PC-3 (cell line): ENCODE measurements at regions of chr3 and their contacts with region 1.

Region 1: DNA sequence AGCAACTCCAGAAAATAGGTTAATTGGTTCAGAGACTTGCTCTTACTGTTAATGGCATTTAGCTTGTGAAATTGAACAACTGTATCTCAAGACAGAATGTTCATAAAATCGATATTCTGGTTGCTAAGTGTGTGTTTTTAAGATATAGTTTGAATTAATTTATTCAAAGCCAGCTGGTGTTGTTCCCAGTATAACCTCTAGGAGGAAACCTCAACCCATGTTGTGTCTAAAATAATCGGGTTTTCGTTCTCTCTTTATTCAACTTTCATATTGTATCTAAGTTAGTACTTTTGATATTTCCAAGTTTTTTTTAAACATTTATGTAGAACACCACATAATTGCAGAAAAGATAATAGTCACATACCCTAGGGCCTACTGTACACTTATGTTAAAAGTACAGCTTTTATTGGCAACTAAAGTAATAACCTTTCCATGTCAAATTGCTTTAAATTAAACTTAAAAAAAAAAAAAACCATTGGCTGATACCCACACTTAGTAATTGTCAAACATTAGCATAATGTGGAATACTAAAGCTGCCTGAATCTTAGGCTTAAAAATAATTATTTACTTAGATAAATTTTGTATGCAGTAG is 90.9 kb downstream of the SAMMSON start:
- DNase-seq: peak; percentile 37
- ATAC-seq: peak; percentile 18; the same call in 1 of the 2 replicates
- H3K4me3 ChIP-seq: no peak overlapping the region
- H3K27ac ChIP-seq: no peak overlapping the region
- H3K4me1 ChIP-seq: no peaks in the 10 kb centered on the region
- H3K27me3 ChIP-seq: 0 out of 2 replicates have a peak, but pooled peaks cover 6% of the 10 kb centered on the region
- CTCF ChIP-seq: peak; percentile 66

Region 2: GRCh38 chr3:70067860-70068521 is 22.4 kb before region 1 on chr3:
- CTCF ChIA-PET with region 1: no interaction called
- POLR2A ChIA-PET with region 1: no interaction called
- intact Hi-C with region 1: no loop called
- DNase-seq: no peak
- ATAC-seq: no peak
- H3K4me3 ChIP-seq: no peak overlapping the region
- H3K27ac ChIP-seq: no peak overlapping the region
- H3K4me1 ChIP-seq: no peaks in the 10 kb centered on the region
- H3K27me3 ChIP-seq: peaks cover 40% of the 10 kb centered on the region
- CTCF ChIP-seq: no peak

Region 3: GRCh38 chr3:70464876-70465275 is 374.5 kb after region 1 on chr3:
- CTCF ChIA-PET with region 1: no interaction called
- POLR2A ChIA-PET with region 1: no interaction called
- intact Hi-C with region 1: no loop called
- DNase-seq: no peak
- ATAC-seq: no peak
- H3K4me3 ChIP-seq: no peak overlapping the region
- H3K27ac ChIP-seq: no peak overlapping the region
- H3K4me1 ChIP-seq: no peaks in the 10 kb centered on the region
- H3K27me3 ChIP-seq: peaks cover 13% of the 10 kb centered on the region; the same call in 1 of the 2 replicates
- CTCF ChIP-seq: no peak

Region 4: GRCh38 chr3:70531063-70531657 is 440.7 kb after region 1 on chr3:
- CTCF ChIA-PET with region 1: no interaction called
- POLR2A ChIA-PET with region 1: no interaction called
- intact Hi-C with region 1: loop called (anchors 1 kb)
- DNase-seq: peak; percentile 26
- ATAC-seq: no peak
- H3K4me3 ChIP-seq: no peak overlapping the region
- H3K27ac ChIP-seq: no peak overlapping the region
- H3K4me1 ChIP-seq: no peaks in the 10 kb centered on the region
- H3K27me3 ChIP-seq: no peaks in the 10 kb centered on the region
- CTCF ChIP-seq: peak; percentile 57